ENCODE measurements at regions of chr1 and their contacts with region 1.

Region 1: DNA sequence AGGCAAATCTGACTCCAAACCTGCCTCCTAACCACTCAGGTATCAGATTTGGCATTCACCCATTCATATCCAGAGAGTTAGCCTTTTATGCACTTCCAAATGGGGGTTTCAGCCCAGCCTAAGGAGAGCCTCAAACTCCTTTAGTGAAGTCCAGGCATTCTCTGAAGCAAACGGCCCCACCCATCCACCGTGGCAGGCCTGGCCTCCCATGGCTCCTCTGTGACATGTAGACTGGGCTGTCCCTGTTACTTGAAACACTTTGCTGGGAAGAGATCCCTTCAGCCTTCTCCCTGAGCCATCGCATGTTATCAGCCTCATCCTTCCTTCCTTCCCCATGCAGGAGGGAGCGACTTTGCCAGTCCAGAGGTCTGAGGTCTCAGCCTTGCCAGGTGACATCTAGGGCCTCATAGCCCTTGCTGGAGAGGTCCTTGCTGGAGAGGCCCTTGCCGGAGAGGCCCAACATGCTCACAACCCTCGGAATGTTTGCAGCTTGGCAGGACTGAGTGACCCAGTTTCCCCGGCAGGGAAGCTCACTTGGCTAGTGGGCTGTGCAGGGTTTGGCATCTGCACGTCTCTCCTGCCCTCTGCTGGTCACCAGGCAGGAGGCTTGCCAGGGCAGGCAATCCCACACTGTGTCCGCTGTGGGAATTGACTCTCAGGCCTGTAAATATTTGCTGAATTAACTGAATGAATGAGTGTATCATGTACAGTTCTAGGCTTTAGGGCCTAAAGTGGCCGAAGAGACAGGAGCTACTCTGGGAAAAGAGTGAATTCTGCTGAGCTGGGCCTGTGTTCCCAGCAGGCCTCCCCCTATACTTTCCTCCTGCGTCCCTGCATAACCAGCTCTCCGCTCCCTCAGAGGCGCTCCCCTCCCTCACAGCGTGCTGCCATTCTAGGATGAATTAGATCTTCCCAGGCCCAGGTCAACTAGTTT is 26.7 kb upstream of the RBM15 start:
- DNase-seq: peak; percentile 67 to 73 (median 70)
- H3K4me3 ChIP-seq: no peak overlapping the region
- H3K4me3 Mint-ChIP-seq: peak overlapping the region in 2 of 8 donors; percentile 32 to 57
- H3K27ac ChIP-seq: no peak overlapping the region
- H3K27ac Mint-ChIP-seq: peak overlapping the region in 2 of 7 donors; percentile 17 to 59
- H3K4me1 ChIP-seq: no peaks in the 10 kb centered on the region
- H3K4me1 Mint-ChIP-seq: peaks cover 0 to 2% (median under 1%) of the 10 kb centered on the region in 4 donors
- H3K27me3 ChIP-seq: no peaks in the 10 kb centered on the region
- H3K27me3 Mint-ChIP-seq: no peaks in the 10 kb centered on the region

Region 2: DNA sequence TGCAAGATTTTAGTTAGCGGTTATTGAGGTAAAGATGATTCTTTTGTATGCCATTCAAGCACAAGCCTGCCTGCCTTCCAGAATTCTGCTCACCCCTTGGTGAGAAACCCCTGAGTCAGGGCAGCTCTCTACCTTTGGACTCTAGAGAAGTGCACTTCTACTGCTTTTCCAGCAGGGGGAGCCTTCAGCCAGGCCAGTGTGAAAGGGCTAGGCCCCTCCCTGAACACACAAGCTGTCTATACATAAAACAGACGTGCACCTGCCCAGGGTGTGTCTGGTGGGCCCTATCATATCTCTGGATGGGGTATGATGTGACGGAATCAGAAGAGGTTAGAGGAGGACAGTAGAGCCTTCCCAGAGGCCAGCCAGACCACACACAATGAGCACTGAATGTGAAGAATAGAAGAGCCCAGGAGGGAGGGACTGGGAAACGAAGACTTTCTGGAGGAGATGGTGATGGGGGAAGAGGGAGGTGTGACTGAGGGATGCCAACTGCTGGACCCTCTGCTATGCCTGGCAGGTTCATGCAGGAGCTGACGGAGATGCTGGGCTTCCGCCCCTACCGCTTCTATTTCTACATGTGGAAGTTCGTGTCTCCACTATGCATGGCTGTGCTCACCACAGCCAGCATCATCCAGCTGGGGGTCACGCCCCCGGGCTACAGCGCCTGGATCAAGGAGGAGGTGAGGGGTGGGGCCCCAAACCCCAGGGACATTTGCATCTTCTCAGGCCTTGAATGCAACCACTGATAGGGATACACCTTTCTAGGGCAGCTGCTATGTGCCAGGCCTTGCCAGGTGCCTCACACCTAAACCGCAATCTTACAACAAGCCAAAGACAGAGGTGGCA is 115.3 kb before region 1 on chr1:
- CTCF ChIA-PET with region 1: interaction called, 724 read pairs
- POLR2A ChIA-PET with region 1: interaction called, 4 read pairs
- intact Hi-C with region 1: no loop called
- DNase-seq: peak; percentile 53 to 65 (median 63)
- H3K4me3 ChIP-seq: no peak overlapping the region
- H3K4me3 Mint-ChIP-seq: no peak overlapping the region
- H3K27ac ChIP-seq: no peak overlapping the region
- H3K27ac Mint-ChIP-seq: peak overlapping the region in 2 of 7 donors; percentile 56 to 80
- H3K4me1 ChIP-seq: no peaks in the 10 kb centered on the region
- H3K4me1 Mint-ChIP-seq: peaks cover 0 to 3% (median under 1%) of the 10 kb centered on the region in 4 donors
- H3K27me3 ChIP-seq: no peaks in the 10 kb centered on the region
- H3K27me3 Mint-ChIP-seq: no peaks in the 10 kb centered on the region

Region 3: GRCh38 chr1:110440877-110441276 is 128.4 kb after region 1 on chr1:
- CTCF ChIA-PET with region 1: no interaction called
- POLR2A ChIA-PET with region 1: no interaction called
- intact Hi-C with region 1: no loop called
- DNase-seq: no peak
- H3K4me3 ChIP-seq: no peak overlapping the region
- H3K4me3 Mint-ChIP-seq: no peak overlapping the region
- H3K27ac ChIP-seq: no peak overlapping the region
- H3K27ac Mint-ChIP-seq: no peak overlapping the region
- H3K4me1 ChIP-seq: no peaks in the 10 kb centered on the region
- H3K4me1 Mint-ChIP-seq: peaks cover 0 to under 1% (median 0%) of the 10 kb centered on the region in 4 donors
- H3K27me3 ChIP-seq: no peaks in the 10 kb centered on the region
- H3K27me3 Mint-ChIP-seq: peaks cover 4 to 10% of the 10 kb centered on the region in 2 donors